Psoas muscle (tissue), 8 donors: ENCODE measurements at regions of chr12 and their contacts with region 1.

Region 1: DNA sequence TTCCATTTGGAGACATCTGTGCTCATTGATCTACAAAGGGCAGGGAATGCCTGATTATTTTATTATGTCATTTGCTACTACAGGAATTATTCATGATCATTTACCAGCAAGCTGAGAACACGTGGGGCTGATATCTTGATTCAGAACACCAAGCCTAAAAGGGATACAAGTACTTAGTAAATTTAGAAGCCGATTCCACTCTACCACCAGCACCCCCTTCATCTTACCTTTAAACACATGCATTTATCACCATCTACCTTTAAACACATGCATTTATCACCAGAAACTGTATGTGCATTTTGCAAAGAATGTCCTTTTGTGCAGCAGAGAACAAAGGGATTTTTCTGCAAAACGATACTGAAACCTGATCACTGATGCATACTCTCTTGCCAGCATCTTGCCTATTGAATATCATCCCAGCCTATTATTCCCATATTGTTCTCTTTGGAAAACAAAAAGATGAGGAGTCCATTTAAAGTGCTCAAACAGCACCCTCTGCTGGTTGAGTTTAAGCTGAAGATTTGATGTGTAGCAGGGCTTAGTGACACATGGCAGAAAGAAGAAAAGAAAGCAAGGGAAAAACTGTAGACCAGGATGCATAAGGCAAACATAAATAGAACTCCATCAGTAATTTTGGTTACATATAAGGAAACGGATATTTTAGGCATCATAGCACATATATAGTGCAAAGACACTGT is 132.6 kb upstream of the PLEKHG7 start:
- DNase-seq: no peak
- ATAC-seq: peak; percentile 63 to 87 (median 76)
- H3K4me3 ChIP-seq: no peak overlapping the region
- H3K27ac ChIP-seq: no peak overlapping the region
- H3K4me1 ChIP-seq: no peaks in the 10 kb centered on the region
- H3K27me3 ChIP-seq: no peaks in the 10 kb centered on the region
- CTCF ChIP-seq: peak; percentile 87

Region 2: DNA sequence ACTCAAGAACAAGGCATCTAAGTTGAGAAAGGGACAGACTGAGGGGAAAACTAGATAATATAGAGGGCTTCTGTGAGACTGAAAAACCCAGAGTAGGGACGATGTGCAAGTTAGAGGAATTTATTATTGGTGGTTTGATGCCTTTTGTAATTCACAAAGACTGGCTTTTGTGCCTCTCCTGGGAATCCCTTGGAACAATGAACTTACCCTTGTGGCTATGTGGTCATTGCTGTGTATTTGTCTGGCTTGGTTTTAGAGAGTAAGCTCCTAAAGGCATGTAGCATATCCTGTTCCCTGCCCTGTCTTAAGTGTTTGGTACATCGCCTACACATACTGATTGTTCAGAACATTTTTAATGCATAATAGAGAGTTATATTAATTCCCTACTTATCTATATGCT is 1414.2 kb before region 1 on chr12:
- intact Hi-C with region 1: no loop called
- DNase-seq: no peak
- ATAC-seq: no peak
- H3K4me3 ChIP-seq: no peak overlapping the region
- H3K27ac ChIP-seq: no peak overlapping the region
- H3K4me1 ChIP-seq: no peaks in the 10 kb centered on the region
- H3K27me3 ChIP-seq: no peaks in the 10 kb centered on the region
- CTCF ChIP-seq: no peak

Region 3: DNA sequence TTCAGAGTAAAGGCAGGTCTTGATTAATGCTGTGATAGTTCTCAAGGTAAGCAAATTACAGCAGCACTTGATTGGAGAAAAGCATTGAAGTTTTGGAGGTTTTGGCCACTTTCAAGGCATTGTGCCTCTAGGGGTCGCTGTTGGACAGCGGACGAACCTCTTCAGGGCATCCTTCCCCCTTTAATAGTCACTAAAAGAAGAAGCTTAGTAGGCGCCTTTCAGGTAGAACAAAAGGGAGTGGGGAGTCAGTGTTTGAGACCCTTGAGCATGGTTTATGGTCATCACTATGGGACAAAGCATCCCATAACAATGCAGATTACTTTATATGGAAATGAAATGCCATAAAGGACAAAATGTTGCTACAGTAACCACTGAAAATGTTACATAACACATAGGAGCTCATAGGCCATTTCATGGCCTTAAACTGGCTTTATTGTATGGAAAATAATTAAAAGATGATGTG is 1188.1 kb before region 1 on chr12:
- intact Hi-C with region 1: loop called (anchors 5 kb)
- DNase-seq: peak; percentile 77 to 84
- ATAC-seq: peak; percentile 68 to 88 (median 78)
- H3K4me3 ChIP-seq: peak overlapping the region; percentile 66
- H3K27ac ChIP-seq: peak overlapping the region; percentile 65
- H3K4me1 ChIP-seq: peaks cover 5% of the 10 kb centered on the region
- H3K27me3 ChIP-seq: no peaks in the 10 kb centered on the region
- CTCF ChIP-seq: peak; percentile 89

Region 4: GRCh38 chr12:91588874-91589454 is 981.2 kb before region 1 on chr12:
- intact Hi-C with region 1: loop called in 1 of 2 experiments (anchors 10 kb)
- DNase-seq: no peak
- ATAC-seq: no peak
- H3K4me3 ChIP-seq: no peak overlapping the region
- H3K27ac ChIP-seq: no peak overlapping the region
- H3K4me1 ChIP-seq: no peaks in the 10 kb centered on the region
- H3K27me3 ChIP-seq: no peaks in the 10 kb centered on the region
- CTCF ChIP-seq: no peak

Region 5: GRCh38 chr12:91811481-91812287 is 758.5 kb before region 1 on chr12:
- intact Hi-C with region 1: loop called (anchors 5 kb)
- DNase-seq: peak; percentile 56 to 71
- ATAC-seq: peak in 2 of 4 donors; percentile 47 to 69
- H3K4me3 ChIP-seq: no peak overlapping the region
- H3K27ac ChIP-seq: no peak overlapping the region
- H3K4me1 ChIP-seq: no peaks in the 10 kb centered on the region
- H3K27me3 ChIP-seq: no peaks in the 10 kb centered on the region
- CTCF ChIP-seq: peak; percentile 79

Region 6: DNA sequence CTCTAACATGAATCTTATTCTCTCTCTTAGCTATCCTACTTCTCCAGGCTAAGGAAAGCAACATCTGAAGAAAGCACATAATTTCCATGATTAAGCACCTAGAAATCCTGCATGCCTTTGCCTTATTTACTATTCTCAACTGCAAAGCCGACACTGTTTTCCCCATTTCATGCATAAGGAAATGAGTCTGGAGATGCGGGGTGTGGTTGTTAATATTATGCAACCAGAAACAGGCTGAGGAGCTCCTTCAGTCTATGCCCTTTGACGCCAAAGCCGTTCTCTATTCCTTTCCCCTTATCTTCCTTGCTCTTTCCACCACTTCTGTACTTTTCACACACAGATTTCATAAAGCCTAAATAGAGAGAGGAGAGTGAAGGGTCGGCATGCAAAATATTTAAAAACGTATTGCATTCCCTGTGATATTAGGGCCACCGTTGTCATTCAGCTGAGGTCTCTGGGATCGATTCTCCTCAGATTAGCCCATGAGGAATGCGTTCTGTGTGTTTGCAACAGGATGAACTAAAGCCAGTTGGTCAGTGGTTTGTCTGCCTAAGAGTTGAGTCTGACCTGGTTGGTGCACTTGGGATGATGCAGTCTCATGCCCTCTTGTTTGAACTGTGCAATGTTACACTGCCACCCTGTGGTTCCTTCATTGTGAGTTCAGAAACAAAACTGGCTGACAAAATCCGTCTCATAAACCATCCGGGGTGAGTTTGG is 79.5 kb after region 1 on chr12:
- intact Hi-C with region 1: loop called in 1 of 2 experiments (anchors 5 kb)
- DNase-seq: no peak
- ATAC-seq: peak; percentile 83 to 91 (median 87)
- H3K4me3 ChIP-seq: no peak overlapping the region
- H3K27ac ChIP-seq: no peak overlapping the region
- H3K4me1 ChIP-seq: no peaks in the 10 kb centered on the region
- H3K27me3 ChIP-seq: no peaks in the 10 kb centered on the region
- CTCF ChIP-seq: peak; percentile 66